ENCODE measurements at regions of chr5 and their contacts with region 1.

Region 1: GRCh38 chr5:124599028-124599973 is 147.1 kb downstream of the ZNF608 start:
- DNase-seq: peak; percentile 43
- ATAC-seq: peak; percentile 83
- H3K4me3 ChIP-seq: peak overlapping the region in 1 of 2 experiments; percentile 19; a peak in 2 of 4 replicates
- H3K27ac ChIP-seq: peak overlapping the region; percentile 97
- H3K4me1 ChIP-seq: peaks cover 47% of the 10 kb centered on the region
- H3K27me3 ChIP-seq: no peaks in the 10 kb centered on the region
- CTCF ChIP-seq: no peak

Region 2: GRCh38 chr5:123907349-123907748 is 692.0 kb before region 1 on chr5:
- CTCF ChIA-PET with region 1: no interaction called
- POLR2A ChIA-PET with region 1: interaction called, 20 read pairs
- in situ Hi-C with region 1: no loop called
- intact Hi-C with region 1: no loop called
- DNase-seq: no peak
- ATAC-seq: no peak
- H3K4me3 ChIP-seq: no peak overlapping the region
- H3K27ac ChIP-seq: no peak overlapping the region; the same call in 1 of the 2 replicates
- H3K4me1 ChIP-seq: no peaks in the 10 kb centered on the region
- H3K27me3 ChIP-seq: no peaks in the 10 kb centered on the region
- CTCF ChIP-seq: no peak